ENCODE measurements at regions of chr11 and their contacts with region 1.

Region 1: DNA sequence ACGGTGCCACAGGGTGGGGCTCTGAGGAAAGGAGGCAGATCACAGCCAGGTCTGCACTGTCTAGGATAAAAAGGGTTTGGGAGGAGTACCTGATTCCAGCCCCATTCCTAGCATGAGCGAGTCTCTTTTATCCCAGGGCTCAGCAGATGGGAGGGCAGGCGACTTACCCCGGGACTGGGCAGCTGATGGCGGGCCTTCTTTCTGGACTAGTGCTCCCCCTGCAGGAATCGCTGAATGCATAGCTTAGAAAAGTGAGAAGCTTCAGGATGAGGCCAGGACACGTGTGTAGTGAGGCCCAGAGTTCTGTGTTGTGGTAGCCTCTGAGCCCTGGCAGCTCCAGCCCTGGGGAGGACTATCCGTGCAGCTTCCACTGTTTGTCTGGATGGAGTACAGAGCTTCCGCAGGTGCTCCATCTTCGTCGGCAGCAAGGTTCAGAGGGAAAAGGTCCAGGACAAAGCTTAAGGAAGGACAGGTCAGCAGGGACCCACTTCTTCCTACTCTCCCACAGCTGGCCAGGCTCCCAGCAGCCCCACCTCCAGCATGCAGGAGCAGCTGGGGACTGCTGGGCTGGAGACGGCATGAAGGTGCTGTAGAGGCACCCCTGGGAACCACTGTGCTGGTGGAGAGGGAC is 30.4 kb downstream of the COMMD9 start:
- DNase-seq: peak; percentile 77
- ATAC-seq: peak; percentile 94
- H3K4me3 ChIP-seq: no peak overlapping the region
- H3K27ac ChIP-seq: no peak overlapping the region
- H3K4me1 ChIP-seq: no peaks in the 10 kb centered on the region
- H3K27me3 ChIP-seq: peaks cover 35% of the 10 kb centered on the region
- CTCF ChIP-seq: peak; percentile 79
- POLR2A ChIP-seq: no peak
- RAD21 ChIP-seq: peak; percentile 84

Region 2: GRCh38 chr11:35943713-35944655 is 314.9 kb before region 1 on chr11 and contains the start of gene LDLRAD3:
- CTCF ChIA-PET with region 1: no interaction called
- POLR2A ChIA-PET with region 1: no interaction called
- dilution Hi-C with region 1: no loop called
- in situ Hi-C with region 1: loop called (anchors 10 kb)
- intact Hi-C with region 1: loop called (anchors 10 kb)
- DNase-seq: peak; percentile 82
- ATAC-seq: peak; percentile 94
- H3K4me3 ChIP-seq: peak within 1 kb of the TSS; percentile 71
- H3K27ac ChIP-seq: peak within 1 kb of the TSS; percentile 91
- H3K4me1 ChIP-seq: peaks cover 4% of the 10 kb centered on the region; the same call in 1 of the 2 replicates
- H3K27me3 ChIP-seq: peaks cover 8% of the 10 kb centered on the region
- CTCF ChIP-seq: no peak
- POLR2A ChIP-seq: peak; percentile 17; the same call in 1 of the 2 replicates
- RAD21 ChIP-seq: no peak
- total RNA-seq, gene LDLRAD3: 2.7 and 3.6 TPM in 2 replicates

Region 3: GRCh38 chr11:36041988-36042611 is 216.7 kb before region 1 on chr11:
- CTCF ChIA-PET with region 1: interaction called, 13 read pairs
- POLR2A ChIA-PET with region 1: no interaction called
- dilution Hi-C with region 1: no loop called
- in situ Hi-C with region 1: loop called (anchors 10 kb)
- intact Hi-C with region 1: loop called (anchors 2 kb)
- DNase-seq: no peak
- ATAC-seq: peak; percentile 77
- H3K4me3 ChIP-seq: no peak overlapping the region
- H3K27ac ChIP-seq: no peak overlapping the region
- H3K4me1 ChIP-seq: no peaks in the 10 kb centered on the region; the same call in 1 of the 2 replicates
- H3K27me3 ChIP-seq: no peaks in the 10 kb centered on the region
- CTCF ChIP-seq: peak; percentile 62
- POLR2A ChIP-seq: no peak
- RAD21 ChIP-seq: peak; percentile 52

Region 4: GRCh38 chr11:36156161-36156816 is 102.6 kb before region 1 on chr11:
- CTCF ChIA-PET with region 1: interaction called, 3 read pairs
- POLR2A ChIA-PET with region 1: no interaction called
- dilution Hi-C with region 1: no loop called
- in situ Hi-C with region 1: no loop called
- intact Hi-C with region 1: loop called (anchors 5 kb)
- DNase-seq: peak; percentile 36
- ATAC-seq: no peak
- H3K4me3 ChIP-seq: no peak overlapping the region
- H3K27ac ChIP-seq: no peak overlapping the region
- H3K4me1 ChIP-seq: peaks cover 5% of the 10 kb centered on the region
- H3K27me3 ChIP-seq: no peaks in the 10 kb centered on the region
- CTCF ChIP-seq: no peak
- POLR2A ChIP-seq: no peak
- RAD21 ChIP-seq: no peak

Measured in IMR-90 (cell line).